ENCODE measurements at regions of chr3 and their contacts with region 1.

Region 1: DNA sequence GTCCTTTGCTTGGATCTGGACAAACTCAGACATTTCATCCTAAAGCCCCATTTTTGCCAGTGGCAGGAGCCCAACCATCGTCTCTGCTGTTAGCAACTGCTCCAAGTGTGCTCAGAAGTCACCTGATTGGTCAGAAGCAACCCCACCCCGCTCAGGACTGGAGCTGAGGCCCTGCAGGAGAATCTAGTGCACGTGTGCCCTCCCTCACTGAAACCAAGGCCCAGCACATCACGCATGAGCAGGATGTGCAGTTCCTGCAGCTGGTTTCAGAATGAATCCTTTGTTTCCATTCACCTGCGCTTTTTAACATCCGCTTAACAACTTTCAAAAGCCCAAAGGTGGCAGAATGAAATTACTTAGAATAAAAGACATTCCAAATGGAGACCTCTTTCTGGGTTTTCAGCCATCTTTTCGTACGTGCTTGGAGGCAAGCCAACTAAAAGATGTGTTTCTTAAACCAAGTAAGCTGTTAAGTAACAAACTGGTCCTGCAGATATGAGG is 81.2 kb downstream of the SRGAP3 start:
- DNase-seq: no peak
- ATAC-seq: peak; percentile 55; the same call in 2 of the 3 replicates
- H3K4me3 ChIP-seq: no peak overlapping the region
- H3K27ac ChIP-seq: no peak overlapping the region
- H3K4me1 ChIP-seq: no peaks in the 10 kb centered on the region
- H3K27me3 ChIP-seq: peaks cover 14 to 56% of the 10 kb centered on the region in 2 experiments; a peak in 3 of 5 replicates
- CTCF ChIP-seq: no peak
- EP300 ChIP-seq: no peak
- POLR2A ChIP-seq: no peak
- RAD21 ChIP-seq: no peak

Region 2: GRCh38 chr3:9192248-9193025 is 24.1 kb after region 1 on chr3:
- CTCF ChIA-PET with region 1: no interaction called
- POLR2A ChIA-PET with region 1: no interaction called
- in situ Hi-C with region 1: no loop called
- intact Hi-C with region 1: loop called (anchors 1 kb)
- DNase-seq: no peak
- ATAC-seq: no peak
- H3K4me3 ChIP-seq: no peak overlapping the region
- H3K27ac ChIP-seq: no peak overlapping the region
- H3K4me1 ChIP-seq: no peaks in the 10 kb centered on the region
- H3K27me3 ChIP-seq: peaks cover 14 to 55% of the 10 kb centered on the region in 2 experiments
- CTCF ChIP-seq: no peak
- EP300 ChIP-seq: no peak
- POLR2A ChIP-seq: no peak
- RAD21 ChIP-seq: no peak

Measured in K562 (cell line).